MCF 10A (cell line): ENCODE measurements at regions of chr7 and their contacts with region 1.

Region 1: GRCh38 chr7:92621026-92621540 is 30.9 kb upstream of the FAM133B start:
- DNase-seq: peak; percentile 81
- H3K4me3 Mint-ChIP-seq: peak overlapping the region; percentile 47
- H3K27ac Mint-ChIP-seq: no peak overlapping the region
- H3K4me1 Mint-ChIP-seq: peaks cover 22% of the 10 kb centered on the region
- H3K27me3 Mint-ChIP-seq: no peaks in the 10 kb centered on the region
- CTCF ChIP-seq: peak; percentile 75

Region 2: DNA sequence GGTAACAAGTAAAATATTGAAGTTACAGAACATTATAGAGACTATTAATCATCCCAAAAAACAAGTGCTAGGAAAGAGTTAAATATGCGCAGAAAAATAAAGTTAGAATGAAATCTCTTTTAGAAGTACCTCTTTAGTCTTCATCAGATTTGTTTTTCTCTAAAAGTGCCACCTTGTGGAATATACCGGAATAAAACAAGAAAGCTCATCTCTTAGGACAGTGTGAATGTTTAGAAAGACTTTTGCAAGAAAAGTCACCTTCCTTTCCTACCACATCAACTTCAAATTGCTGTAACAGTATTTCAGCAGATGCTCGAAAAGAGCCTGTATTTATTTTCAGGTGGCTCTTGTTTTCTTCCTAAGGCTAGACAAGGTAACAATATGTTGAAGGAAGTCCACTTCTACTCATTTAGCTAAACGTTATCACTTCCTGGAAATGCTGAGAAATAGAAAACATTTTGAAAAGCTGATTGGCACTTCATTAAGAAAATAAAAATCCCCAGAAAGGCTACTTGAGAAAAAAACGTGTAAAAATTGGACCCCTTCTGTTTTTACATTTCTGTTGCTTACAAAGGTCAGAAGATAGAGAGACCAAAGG is 11.1 kb before region 1 on chr7:
- CTCF ChIA-PET with region 1: interaction called, 29 read pairs
- POLR2A ChIA-PET with region 1: interaction called, 3 read pairs
- intact Hi-C with region 1: no loop called
- DNase-seq: peak; percentile 36
- H3K4me3 Mint-ChIP-seq: no peak overlapping the region
- H3K27ac Mint-ChIP-seq: no peak overlapping the region
- H3K4me1 Mint-ChIP-seq: no peaks in the 10 kb centered on the region
- H3K27me3 Mint-ChIP-seq: no peaks in the 10 kb centered on the region
- CTCF ChIP-seq: peak; percentile 38

Region 3: GRCh38 chr7:92645114-92646061 is 24.3 kb after region 1 on chr7:
- CTCF ChIA-PET with region 1: interaction called, 12 read pairs
- POLR2A ChIA-PET with region 1: interaction called, 5 read pairs
- intact Hi-C with region 1: no loop called
- DNase-seq: peak; percentile 80
- H3K4me3 Mint-ChIP-seq: peak overlapping the region; percentile 7
- H3K27ac Mint-ChIP-seq: peak overlapping the region; percentile 38
- H3K4me1 Mint-ChIP-seq: peaks cover 34% of the 10 kb centered on the region
- H3K27me3 Mint-ChIP-seq: no peaks in the 10 kb centered on the region
- CTCF ChIP-seq: no peak

Region 4: GRCh38 chr7:92674127-92674778 is 53.2 kb after region 1 on chr7:
- CTCF ChIA-PET with region 1: no interaction called
- POLR2A ChIA-PET with region 1: no interaction called
- intact Hi-C with region 1: no loop called
- DNase-seq: no peak
- H3K4me3 Mint-ChIP-seq: no peak overlapping the region
- H3K27ac Mint-ChIP-seq: no peak overlapping the region
- H3K4me1 Mint-ChIP-seq: peaks cover 10% of the 10 kb centered on the region
- H3K27me3 Mint-ChIP-seq: no peaks in the 10 kb centered on the region
- CTCF ChIP-seq: no peak

Region 5: DNA sequence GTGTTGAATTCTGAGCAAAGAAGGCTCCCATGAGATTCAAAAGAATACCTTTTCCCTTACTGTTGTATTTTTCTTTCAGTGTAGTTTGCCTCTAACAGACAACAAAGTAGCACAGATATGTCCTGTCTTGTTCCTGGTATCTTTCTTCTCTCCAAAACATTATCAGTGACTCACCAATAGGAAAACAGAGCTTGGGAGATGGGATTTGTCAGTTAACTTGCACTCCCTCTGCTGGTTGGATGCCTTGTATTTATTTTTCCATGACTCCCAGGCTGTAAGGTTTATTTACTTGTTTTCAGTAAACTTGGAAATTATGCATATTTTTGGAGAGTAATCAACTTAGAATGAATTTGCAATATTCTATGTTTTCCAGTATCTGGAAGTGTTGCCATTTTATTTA is 367.0 kb after region 1 on chr7:
- CTCF ChIA-PET with region 1: interaction called, 19 read pairs
- POLR2A ChIA-PET with region 1: no interaction called
- intact Hi-C with region 1: loop called (anchors 2 kb)
- DNase-seq: peak; percentile 45
- H3K4me3 Mint-ChIP-seq: no peak overlapping the region
- H3K27ac Mint-ChIP-seq: peak overlapping the region; percentile 59
- H3K4me1 Mint-ChIP-seq: peaks cover 26% of the 10 kb centered on the region
- H3K27me3 Mint-ChIP-seq: no peaks in the 10 kb centered on the region
- CTCF ChIP-seq: peak; percentile 30